CD8-positive, alpha-beta memory T cell (primary cell): ENCODE measurements at regions of chr17 and their contacts with region 1.

Region 1: DNA sequence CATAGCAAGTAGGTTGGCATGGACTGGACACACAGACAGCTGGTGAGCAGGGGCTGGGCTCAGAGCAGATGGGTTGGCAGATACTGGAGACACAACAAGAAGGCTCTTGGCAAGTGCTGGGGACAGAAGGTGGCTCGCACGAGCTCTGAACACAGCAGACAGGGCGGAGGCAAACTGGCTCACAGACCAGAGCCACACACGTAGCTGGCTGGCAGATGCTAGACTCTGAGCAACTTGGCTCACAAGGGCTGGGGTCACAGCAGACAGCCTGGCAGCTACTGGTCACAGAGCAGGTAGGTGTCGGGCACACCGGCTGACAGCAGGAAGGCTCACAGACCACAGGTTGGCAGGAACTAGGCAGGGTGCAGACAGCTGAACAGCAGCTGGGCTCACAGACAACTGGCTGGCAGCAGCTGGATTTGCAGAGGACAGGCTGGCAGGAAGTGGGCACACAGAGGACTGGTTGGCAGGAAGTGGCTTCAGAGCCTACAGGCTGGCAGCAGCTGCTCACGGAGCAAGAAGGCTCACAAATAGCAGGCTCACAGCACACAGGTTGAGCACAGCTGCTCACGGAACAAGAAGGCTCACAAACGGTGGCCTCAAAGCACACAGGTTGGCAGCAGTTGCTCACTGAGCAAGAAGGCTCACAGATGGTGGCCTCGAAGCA is 725 bp downstream of the KRTAP16-1 start:
- DNase-seq: peak; percentile 72 to 95 (median 92)
- H3K4me3 ChIP-seq: peak overlapping the region; percentile 35
- H3K4me3 Mint-ChIP-seq: peak overlapping the region; percentile 66 to 86 (median 71)
- H3K27ac ChIP-seq: peak overlapping the region; percentile 55
- H3K27ac Mint-ChIP-seq: peak overlapping the region; percentile 95 to 100 (median 98)
- H3K4me1 ChIP-seq: peaks cover 48% of the 10 kb centered on the region
- H3K4me1 Mint-ChIP-seq: peaks cover 52 to 66% (median 58%) of the 10 kb centered on the region in 3 donors
- H3K27me3 ChIP-seq: no peaks in the 10 kb centered on the region
- H3K27me3 Mint-ChIP-seq: peaks cover 0 to 2% of the 10 kb centered on the region in 2 donors

Region 2: GRCh38 chr17:41322094-41322902 is 13.9 kb after region 1 on chr17:
- CTCF ChIA-PET with region 1: interaction called, 28 read pairs
- POLR2A ChIA-PET with region 1: interaction called, 10 read pairs
- DNase-seq: peak in 2 of 5 donors; percentile 46 to 61
- H3K4me3 ChIP-seq: no peak overlapping the region
- H3K4me3 Mint-ChIP-seq: no peak overlapping the region
- H3K27ac ChIP-seq: no peak overlapping the region
- H3K27ac Mint-ChIP-seq: peak overlapping the region in 6 of 8 donors; percentile 71 to 96 (median 82)
- H3K4me1 ChIP-seq: peaks cover 37% of the 10 kb centered on the region
- H3K4me1 Mint-ChIP-seq: peaks cover 40 to 62% (median 54%) of the 10 kb centered on the region in 3 donors
- H3K27me3 ChIP-seq: no peaks in the 10 kb centered on the region
- H3K27me3 Mint-ChIP-seq: no peaks in the 10 kb centered on the region

Region 3: GRCh38 chr17:41340934-41341861 is 32.8 kb after region 1 on chr17:
- CTCF ChIA-PET with region 1: interaction called, 7 read pairs
- POLR2A ChIA-PET with region 1: interaction called, 11 read pairs
- DNase-seq: peak; percentile 37 to 87 (median 80)
- H3K4me3 ChIP-seq: peak overlapping the region; percentile 25
- H3K4me3 Mint-ChIP-seq: peak overlapping the region; percentile 37 to 87 (median 75)
- H3K27ac ChIP-seq: peak overlapping the region; percentile 7
- H3K27ac Mint-ChIP-seq: peak overlapping the region; percentile 92 to 99 (median 98)
- H3K4me1 ChIP-seq: peaks cover 63% of the 10 kb centered on the region
- H3K4me1 Mint-ChIP-seq: peaks cover 67 to 81% (median 73%) of the 10 kb centered on the region in 3 donors
- H3K27me3 ChIP-seq: no peaks in the 10 kb centered on the region
- H3K27me3 Mint-ChIP-seq: no peaks in the 10 kb centered on the region